Transverse colon (tissue), 4 donors: ENCODE measurements at regions of chr1 and their contacts with region 1.

Region 1: GRCh38 chr1:223161321-223161720 is 18.3 kb upstream of the TLR5 start:
- DNase-seq: no peak
- H3K4me3 ChIP-seq: no peak overlapping the region
- H3K27ac ChIP-seq: no peak overlapping the region
- H3K4me1 ChIP-seq: no peaks in the 10 kb centered on the region
- H3K27me3 ChIP-seq: no peaks in the 10 kb centered on the region
- CTCF ChIP-seq: no peak
- EP300 ChIP-seq: no peak
- POLR2A ChIP-seq: no peak

Region 2: DNA sequence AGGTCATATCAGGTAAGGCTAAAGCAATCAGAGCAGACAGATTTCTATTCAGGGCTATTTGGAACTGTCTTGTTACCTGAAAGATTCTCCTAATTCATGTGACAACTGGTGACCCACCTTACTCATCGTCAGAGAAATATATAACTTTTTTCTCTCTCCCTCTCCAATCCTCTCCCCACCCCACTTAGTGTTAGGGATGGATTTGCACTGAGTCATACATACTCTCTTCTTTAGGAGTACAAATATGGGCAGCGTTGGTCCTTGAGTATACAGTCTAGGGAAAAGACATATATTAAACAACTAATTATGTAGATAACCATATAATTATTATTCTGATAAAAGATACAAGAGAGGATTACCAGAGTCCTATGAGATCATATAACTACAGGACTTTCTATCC is 859.7 kb before region 1 on chr1:
- in situ Hi-C with region 1: no loop called
- intact Hi-C with region 1: loop called (anchors 5 kb)
- DNase-seq: no peak
- H3K4me3 ChIP-seq: no peak overlapping the region
- H3K27ac ChIP-seq: no peak overlapping the region
- H3K4me1 ChIP-seq: no peaks in the 10 kb centered on the region
- H3K27me3 ChIP-seq: no peaks in the 10 kb centered on the region
- CTCF ChIP-seq: no peak
- EP300 ChIP-seq: no peak
- POLR2A ChIP-seq: no peak

Region 3: GRCh38 chr1:223207293-223208066 is 46.2 kb after region 1 on chr1:
- in situ Hi-C with region 1: no loop called
- intact Hi-C with region 1: no loop called
- DNase-seq: no peak
- H3K4me3 ChIP-seq: no peak overlapping the region
- H3K27ac ChIP-seq: no peak overlapping the region
- H3K4me1 ChIP-seq: no peaks in the 10 kb centered on the region
- H3K27me3 ChIP-seq: no peaks in the 10 kb centered on the region
- CTCF ChIP-seq: no peak
- EP300 ChIP-seq: no peak
- POLR2A ChIP-seq: no peak

Region 4: DNA sequence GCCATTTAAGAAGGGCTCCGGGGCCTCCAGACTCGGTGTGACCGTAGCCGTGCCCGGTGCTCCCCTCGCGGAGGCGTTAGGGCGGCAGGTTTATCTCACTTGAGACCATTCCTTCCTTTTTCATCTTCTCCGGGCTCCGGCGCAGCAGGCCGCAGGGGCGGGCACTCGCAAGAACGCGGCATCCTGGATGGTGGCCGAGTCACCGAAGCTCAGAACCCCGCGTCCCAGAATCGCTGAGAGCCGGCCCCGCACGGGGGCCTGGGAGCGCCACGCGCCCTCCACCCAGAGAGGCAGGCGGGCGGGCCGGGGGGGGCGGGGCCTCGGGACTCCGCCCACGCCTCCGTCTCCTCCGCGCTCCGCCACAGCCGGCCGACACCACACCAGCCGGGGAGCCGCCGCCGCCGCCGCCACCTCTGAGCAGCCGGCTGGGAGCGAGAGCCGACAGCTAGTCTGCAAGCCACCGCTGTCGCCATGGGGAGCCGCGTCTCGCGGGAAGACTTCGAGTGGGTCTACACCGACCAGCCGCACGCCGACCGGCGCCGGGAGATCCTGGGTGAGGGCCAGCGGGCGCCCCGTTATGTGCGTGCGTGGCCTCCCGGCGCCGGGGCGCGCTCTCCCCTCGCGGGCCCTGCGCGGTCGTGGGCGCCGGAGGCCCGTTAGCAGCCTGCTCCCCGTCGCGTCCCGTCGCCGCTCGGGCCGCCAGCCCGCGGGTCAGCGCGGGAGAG is 1021.7 kb after region 1 on chr1 and contains the start of gene DEGS1:
- in situ Hi-C with region 1: no loop called
- intact Hi-C with region 1: no loop called
- DNase-seq: peak; percentile 85
- H3K4me3 ChIP-seq: peak within 1 kb of the TSS; percentile 67 to 86 (median 80)
- H3K27ac ChIP-seq: peak within 1 kb of the TSS; percentile 89 to 98 (median 94)
- H3K4me1 ChIP-seq: peaks cover 6 to 37% (median 18%) of the 10 kb centered on the region in 4 donors
- H3K27me3 ChIP-seq: no peaks in the 10 kb centered on the region
- CTCF ChIP-seq: no peak
- EP300 ChIP-seq: no peak
- POLR2A ChIP-seq: peak; percentile 79
- total RNA-seq, gene DEGS1: 19.1 to 32.9 (median 22.6) TPM